Activated CD8-positive, alpha-beta T cell treated with anti-CD3 and anti-CD28 coated beads, Interleukin-2, amount 10 ng/mL, durations not matched to agents 7 days and 5 days (primary cell): ENCODE measurements at regions of chr22 and their contacts with region 1.

Region 1: GRCh38 chr22:25081409-25081824 is 118.2 kb upstream of the CRYBB3 start:
- DNase-seq: peak; percentile 74
- ATAC-seq: peak; percentile 63
- H3K4me3 Mint-ChIP-seq: no peak overlapping the region
- H3K27ac Mint-ChIP-seq: no peak overlapping the region
- H3K4me1 Mint-ChIP-seq: peaks cover 65% of the 10 kb centered on the region
- H3K27me3 Mint-ChIP-seq: no peaks in the 10 kb centered on the region

Region 2: GRCh38 chr22:24768537-24769374 is 312.7 kb before region 1 on chr22:
- CTCF ChIA-PET with region 1: no interaction called
- POLR2A ChIA-PET with region 1: no interaction called
- DNase-seq: peak; percentile 57
- ATAC-seq: peak; percentile 64
- H3K4me3 Mint-ChIP-seq: no peak overlapping the region
- H3K27ac Mint-ChIP-seq: no peak overlapping the region
- H3K4me1 Mint-ChIP-seq: peaks cover 6% of the 10 kb centered on the region
- H3K27me3 Mint-ChIP-seq: peaks cover 5% of the 10 kb centered on the region

Region 3: GRCh38 chr22:25067851-25068421 is 13.5 kb before region 1 on chr22:
- CTCF ChIA-PET with region 1: interaction called, 112 read pairs
- POLR2A ChIA-PET with region 1: interaction called, 16 read pairs
- DNase-seq: peak; percentile 93
- ATAC-seq: peak; percentile 89
- H3K4me3 Mint-ChIP-seq: peak overlapping the region; percentile 80
- H3K27ac Mint-ChIP-seq: peak overlapping the region; percentile 95
- H3K4me1 Mint-ChIP-seq: peaks cover 92% of the 10 kb centered on the region
- H3K27me3 Mint-ChIP-seq: no peaks in the 10 kb centered on the region

Region 4: GRCh38 chr22:25202290-25202921 is 121.0 kb after region 1 on chr22:
- CTCF ChIA-PET with region 1: interaction called, 16 read pairs
- POLR2A ChIA-PET with region 1: no interaction called
- DNase-seq: peak; percentile 70
- ATAC-seq: peak; percentile 68
- H3K4me3 Mint-ChIP-seq: no peak overlapping the region
- H3K27ac Mint-ChIP-seq: no peak overlapping the region
- H3K4me1 Mint-ChIP-seq: peaks cover 19% of the 10 kb centered on the region
- H3K27me3 Mint-ChIP-seq: no peaks in the 10 kb centered on the region